GM23248 (cell line): ENCODE measurements at regions of chr15 and their contacts with region 1.

Region 1: DNA sequence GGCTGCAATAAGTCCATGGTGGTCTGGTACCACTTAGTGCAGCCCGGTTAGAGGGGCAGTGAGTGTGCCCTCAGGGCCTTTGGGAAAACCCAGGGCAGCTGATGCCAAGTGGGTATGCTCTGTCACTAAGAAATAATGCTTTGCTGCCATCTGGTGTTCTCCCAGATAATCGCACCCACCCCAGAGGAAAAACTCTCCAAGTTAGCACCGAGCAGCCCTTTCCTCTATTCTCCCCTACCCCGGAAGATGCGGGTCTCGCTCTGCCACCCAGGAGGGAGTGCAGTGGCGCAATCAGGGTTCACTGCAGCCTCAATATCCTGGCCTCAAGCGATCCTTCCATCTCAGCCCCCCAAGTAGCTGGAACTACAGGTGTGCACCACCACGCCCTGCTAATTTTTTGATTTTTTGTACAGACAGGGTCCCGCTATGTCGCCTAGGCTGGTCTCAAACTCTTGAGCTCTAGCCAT is 21.3 kb upstream of the DAPK2 start:
- DNase-seq: peak; percentile 72
- H3K4me3 ChIP-seq: no peak overlapping the region
- H3K27ac ChIP-seq: no peak overlapping the region
- H3K4me1 ChIP-seq: peaks cover 25% of the 10 kb centered on the region
- H3K27me3 ChIP-seq: no peaks in the 10 kb centered on the region

Region 2: DNA sequence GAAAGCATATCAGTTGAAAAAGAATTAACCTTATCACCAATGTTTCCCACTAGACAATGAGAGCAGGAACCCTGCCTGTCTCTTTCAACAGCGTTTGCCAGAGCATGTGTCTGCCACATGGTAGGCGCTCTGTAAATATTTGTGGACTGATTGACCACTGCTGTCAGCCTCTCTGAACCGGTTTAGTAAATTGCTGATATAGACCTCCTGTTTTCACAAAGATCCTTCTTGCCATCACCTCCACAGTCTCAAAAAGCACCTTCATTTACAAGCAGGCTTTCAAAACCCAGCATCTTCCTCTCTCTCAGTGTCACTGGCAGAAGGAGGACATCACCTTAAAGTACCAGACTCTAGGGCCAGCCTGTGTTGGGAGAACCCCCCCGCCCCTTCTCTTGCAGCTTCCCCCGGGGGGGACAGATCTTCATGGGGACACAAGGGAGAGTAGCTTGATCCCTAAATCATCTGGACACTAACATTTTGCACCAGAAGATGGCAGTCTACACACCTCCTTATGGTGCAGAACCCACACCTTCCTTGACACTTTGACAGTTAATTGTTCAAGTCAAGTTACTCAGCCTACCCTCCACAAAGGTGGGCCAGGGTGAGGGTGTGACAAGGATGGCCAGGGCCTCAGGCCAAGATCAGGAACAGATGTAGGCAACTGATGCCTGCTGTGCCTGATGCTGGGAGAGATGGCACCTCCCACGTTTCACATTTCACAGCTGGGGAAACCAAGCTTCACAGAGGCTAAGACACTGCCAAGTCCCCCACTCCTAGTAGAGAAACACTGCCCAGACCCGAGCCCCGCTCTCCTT is 601.0 kb before region 1 on chr15:
- in situ Hi-C with region 1: loop called (anchors 25 kb)
- DNase-seq: peak; percentile 66
- H3K4me3 ChIP-seq: no peak overlapping the region
- H3K27ac ChIP-seq: no peak overlapping the region
- H3K4me1 ChIP-seq: 0 out of 2 replicates have a peak, but pooled peaks cover 12% of the 10 kb centered on the region
- H3K27me3 ChIP-seq: 0 out of 2 replicates have a peak, but pooled peaks cover 7% of the 10 kb centered on the region

Region 3: DNA sequence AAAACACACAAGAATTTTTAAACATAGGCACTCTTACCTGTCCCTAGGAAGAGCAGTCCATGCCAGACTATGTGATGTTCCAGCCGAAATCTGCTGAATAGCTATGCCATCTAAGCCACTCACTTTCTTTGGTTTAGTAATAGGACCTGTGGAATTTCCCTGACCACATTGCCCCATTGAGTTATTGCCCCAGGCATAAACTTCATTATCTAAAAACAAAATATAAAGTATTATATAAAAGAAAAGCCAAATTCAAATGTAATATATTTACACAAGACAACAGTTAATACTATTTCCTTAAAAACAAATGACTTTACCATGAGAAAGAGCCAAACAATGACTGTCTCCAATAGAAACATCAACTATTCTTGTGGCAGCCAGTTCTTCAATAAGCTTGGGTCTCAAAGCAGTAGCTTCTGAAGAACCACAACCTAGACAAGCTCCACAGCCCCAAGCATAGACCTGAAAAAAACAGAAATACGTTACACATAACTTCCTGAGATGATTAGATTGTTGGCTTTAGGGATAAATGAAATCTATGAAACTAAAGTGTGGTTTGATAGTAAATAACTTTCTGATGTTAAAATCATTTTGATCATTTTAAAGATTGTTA is 318.2 kb before region 1 on chr15:
- in situ Hi-C with region 1: loop called (anchors 10 kb)
- DNase-seq: peak; percentile 12
- H3K4me3 ChIP-seq: no peak overlapping the region
- H3K27ac ChIP-seq: no peak overlapping the region
- H3K4me1 ChIP-seq: no peaks in the 10 kb centered on the region
- H3K27me3 ChIP-seq: no peaks in the 10 kb centered on the region